ENCODE measurements at regions of chr11 and their contacts with region 1.

Region 1: DNA sequence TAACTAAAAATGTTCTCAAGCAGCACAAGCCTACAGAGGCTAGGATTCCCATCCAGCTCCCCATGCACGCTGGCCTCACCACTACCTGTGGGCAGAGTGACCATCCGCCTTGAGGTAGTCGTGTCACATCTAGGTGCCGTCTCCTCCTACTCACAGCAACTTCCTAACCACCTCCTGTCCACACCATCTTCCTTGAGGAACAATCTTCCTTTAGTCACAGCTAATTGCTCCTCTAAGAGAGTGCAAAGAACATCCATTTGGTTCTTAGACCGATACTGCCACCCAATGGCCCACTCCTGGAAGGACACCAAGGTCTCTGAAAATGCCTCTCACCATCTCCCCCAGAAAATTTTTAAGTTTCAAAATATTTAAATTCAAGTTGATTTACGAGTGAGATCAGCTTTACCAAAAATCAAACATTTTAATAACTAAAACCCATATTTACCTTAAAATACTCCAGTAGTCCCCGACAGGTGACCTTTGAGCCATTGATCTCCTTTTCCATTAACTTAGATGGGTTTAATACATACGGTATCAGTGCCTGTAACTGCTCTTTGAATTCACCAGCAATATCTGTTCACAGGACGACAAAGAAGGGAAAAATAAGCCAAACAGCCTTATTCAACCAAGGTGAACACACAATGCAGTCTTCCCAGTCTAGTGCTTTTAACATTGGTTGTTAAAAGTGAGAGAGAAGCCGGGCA is 21.7 kb upstream of the PLAAT3 start:
- DNase-seq: peak; percentile 80
- H3K4me3 Mint-ChIP-seq: no peak overlapping the region
- H3K27ac Mint-ChIP-seq: peak overlapping the region; percentile 93
- H3K4me1 Mint-ChIP-seq: peaks cover 20% of the 10 kb centered on the region
- H3K27me3 Mint-ChIP-seq: no peaks in the 10 kb centered on the region
- CTCF ChIP-seq: peak; percentile 62

Region 2: GRCh38 chr11:63132985-63133775 is 502.7 kb before region 1 on chr11:
- CTCF ChIA-PET with region 1: no interaction called
- intact Hi-C with region 1: loop called (anchors 5 kb)
- DNase-seq: no peak
- H3K4me3 Mint-ChIP-seq: no peak overlapping the region
- H3K27ac Mint-ChIP-seq: no peak overlapping the region
- H3K4me1 Mint-ChIP-seq: no peaks in the 10 kb centered on the region
- H3K27me3 Mint-ChIP-seq: peaks cover 90% of the 10 kb centered on the region
- CTCF ChIP-seq: no peak

Region 3: DNA sequence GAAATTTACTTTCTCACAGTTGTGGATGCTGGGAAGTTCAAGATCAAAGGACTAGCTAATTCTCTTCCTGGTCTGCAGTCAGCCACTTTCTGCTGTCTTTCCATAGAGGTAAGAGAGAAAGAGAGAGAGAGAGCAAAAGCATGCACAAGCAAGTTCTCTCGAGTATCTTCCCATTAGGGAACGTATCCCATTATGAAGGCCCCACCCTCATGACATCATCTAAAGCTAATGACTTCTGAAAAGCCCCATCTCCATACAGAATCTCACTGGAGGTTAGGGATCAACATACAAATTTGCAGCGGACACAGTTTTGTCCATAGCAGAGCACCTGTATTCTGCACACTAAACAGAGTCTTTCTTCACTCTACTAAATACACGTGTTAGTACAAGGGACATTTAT is 283.8 kb before region 1 on chr11:
- CTCF ChIA-PET with region 1: no interaction called
- intact Hi-C with region 1: loop called (anchors 10 kb)
- DNase-seq: no peak
- H3K4me3 Mint-ChIP-seq: no peak overlapping the region
- H3K27ac Mint-ChIP-seq: no peak overlapping the region
- H3K4me1 Mint-ChIP-seq: no peaks in the 10 kb centered on the region
- H3K27me3 Mint-ChIP-seq: peaks cover 87% of the 10 kb centered on the region
- CTCF ChIP-seq: no peak

Region 4: GRCh38 chr11:63536669-63537292 is 99.1 kb before region 1 on chr11 and contains the start of gene PLAAT4:
- CTCF ChIA-PET with region 1: no interaction called
- intact Hi-C with region 1: loop called (anchors 5 kb)
- DNase-seq: peak; percentile 29
- H3K4me3 Mint-ChIP-seq: peak within 1 kb of the TSS; percentile 71
- H3K27ac Mint-ChIP-seq: peak within 1 kb of the TSS; percentile 37
- H3K4me1 Mint-ChIP-seq: peaks cover 43% of the 10 kb centered on the region
- H3K27me3 Mint-ChIP-seq: no peaks in the 10 kb centered on the region
- CTCF ChIP-seq: no peak
- total RNA-seq, gene PLAAT4: 157 and 269 TPM in 2 replicates

Region 5: DNA sequence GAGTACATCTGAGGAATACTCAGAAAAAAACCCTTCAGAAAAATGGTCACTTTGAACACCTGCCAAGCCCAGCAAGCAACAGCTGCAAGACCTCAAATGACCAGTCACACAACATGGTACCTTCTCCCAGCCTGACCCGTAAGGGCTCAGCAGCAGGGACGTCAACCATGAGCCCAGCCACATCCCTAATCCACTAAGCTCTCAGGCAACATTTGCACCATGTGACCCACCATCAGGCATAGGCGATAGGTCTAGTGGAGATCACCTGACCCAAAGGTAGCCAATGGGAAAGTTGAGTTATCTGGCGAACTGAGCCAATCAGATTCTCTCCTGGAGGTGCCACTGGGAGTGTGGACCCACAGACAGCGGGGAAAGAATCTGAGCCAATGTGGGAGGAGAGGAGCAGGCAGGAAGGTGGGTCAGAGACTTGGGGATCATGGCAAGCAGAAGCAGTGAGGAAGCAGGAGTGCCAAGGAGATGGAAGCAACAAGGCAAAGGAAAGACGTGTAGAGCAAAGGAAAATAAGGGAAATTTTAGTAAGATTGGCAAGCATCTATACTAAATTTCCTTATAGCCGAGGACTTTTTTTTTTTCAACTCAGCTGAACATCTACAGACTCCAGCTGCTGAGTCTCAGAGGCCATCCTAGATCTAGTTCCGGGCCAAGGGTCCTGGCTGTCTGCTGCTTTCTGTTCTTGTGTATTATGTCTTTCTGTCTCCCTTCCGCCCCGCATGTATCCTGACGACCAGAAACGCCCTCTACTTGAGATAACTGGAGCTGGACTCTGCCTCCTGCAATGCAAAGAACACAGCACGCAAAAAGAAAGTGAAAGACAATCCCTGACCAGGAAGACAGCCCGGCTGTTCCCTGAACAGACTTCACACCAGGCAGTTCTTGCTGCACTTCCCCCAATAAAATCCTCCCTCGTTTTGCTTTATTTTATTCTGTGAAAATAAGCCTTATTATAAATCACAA is 61.7 kb before region 1 on chr11:
- CTCF ChIA-PET with region 1: no interaction called
- intact Hi-C with region 1: no loop called
- DNase-seq: peak; percentile 47
- H3K4me3 Mint-ChIP-seq: peak overlapping the region; percentile 41
- H3K27ac Mint-ChIP-seq: peak overlapping the region; percentile 76
- H3K4me1 Mint-ChIP-seq: peaks cover 78% of the 10 kb centered on the region
- H3K27me3 Mint-ChIP-seq: no peaks in the 10 kb centered on the region
- CTCF ChIP-seq: no peak

Region 6: GRCh38 chr11:63592975-63593395 is 42.9 kb before region 1 on chr11:
- CTCF ChIA-PET with region 1: no interaction called
- intact Hi-C with region 1: loop called (anchors 2 kb)
- DNase-seq: peak; percentile 44
- H3K4me3 Mint-ChIP-seq: no peak overlapping the region
- H3K27ac Mint-ChIP-seq: peak overlapping the region; percentile 68
- H3K4me1 Mint-ChIP-seq: peaks cover 46% of the 10 kb centered on the region
- H3K27me3 Mint-ChIP-seq: no peaks in the 10 kb centered on the region
- CTCF ChIP-seq: peak; percentile 54

Measured in Calu3 (cell line).